ENCODE measurements at regions of chr22 and their contacts with region 1.

Region 1: GRCh38 chr22:40922484-40923303 is 28.5 kb upstream of the RBX1 start:
- DNase-seq: no peak
- H3K4me3 ChIP-seq: no peak overlapping the region
- H3K27ac ChIP-seq: no peak overlapping the region
- H3K4me1 ChIP-seq: peaks cover 0 to 4% (median 1%) of the 10 kb centered on the region in 4 donors
- H3K27me3 ChIP-seq: no peaks in the 10 kb centered on the region
- CTCF ChIP-seq: peak; percentile 33 to 75 (median 60)
- EP300 ChIP-seq: no peak
- POLR2A ChIP-seq: no peak

Region 2: DNA sequence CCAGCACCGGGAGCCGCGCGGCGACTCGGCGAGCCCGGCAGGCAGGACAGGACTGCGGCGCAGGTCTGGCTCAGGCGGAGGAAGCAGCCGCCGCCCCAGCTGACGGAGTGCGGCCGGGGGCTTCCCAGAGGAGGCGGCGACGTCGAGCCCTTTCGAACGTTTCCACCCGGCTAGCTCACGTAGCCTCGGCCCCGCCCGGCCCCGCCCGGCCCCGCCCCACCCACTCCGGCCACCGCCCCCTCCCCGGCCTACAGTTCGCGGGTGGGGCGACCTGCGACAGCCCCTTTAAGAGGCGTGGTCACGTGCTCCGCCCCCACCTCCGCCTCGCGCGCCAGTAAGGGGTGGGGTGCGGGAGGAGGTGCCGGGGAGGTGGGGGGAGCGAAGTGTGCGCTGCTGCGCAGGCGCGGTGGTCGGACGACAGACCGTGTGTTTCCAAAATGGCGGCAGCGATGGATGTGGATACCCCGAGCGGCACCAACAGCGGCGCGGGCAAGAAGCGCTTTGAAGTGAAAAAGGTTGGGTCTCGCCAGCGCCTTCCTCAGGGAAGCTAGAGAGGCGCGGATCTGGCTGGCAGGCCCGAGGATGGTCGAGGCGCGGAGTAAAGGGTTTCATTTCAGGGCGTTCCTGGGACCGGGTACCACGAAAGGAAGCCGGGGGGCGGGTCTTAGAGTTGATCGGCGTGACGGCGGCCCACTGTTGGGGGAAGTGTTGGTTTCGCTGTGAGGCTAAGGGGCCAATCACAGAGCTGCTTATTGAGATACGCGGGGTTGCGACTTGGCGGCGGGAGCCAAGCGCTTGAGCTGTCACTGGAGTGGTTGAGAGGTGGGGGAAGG is 28.5 kb after region 1 on chr22 and contains the start of gene RBX1:
- intact Hi-C with region 1: no loop called
- DNase-seq: peak; percentile 99
- H3K4me3 ChIP-seq: peak within 1 kb of the TSS; percentile 72 to 86 (median 80)
- H3K27ac ChIP-seq: peak within 1 kb of the TSS; percentile 96 to 98 (median 97)
- H3K4me1 ChIP-seq: peaks cover 0 to 38% (median 23%) of the 10 kb centered on the region in 4 donors
- H3K27me3 ChIP-seq: no peaks in the 10 kb centered on the region
- CTCF ChIP-seq: no peak
- EP300 ChIP-seq: peak in 1 of 4 donors; percentile 79
- POLR2A ChIP-seq: peak; percentile 25 to 39
- total RNA-seq, gene RBX1: 32.4 to 72.8 (median 51.2) TPM

Region 3: DNA sequence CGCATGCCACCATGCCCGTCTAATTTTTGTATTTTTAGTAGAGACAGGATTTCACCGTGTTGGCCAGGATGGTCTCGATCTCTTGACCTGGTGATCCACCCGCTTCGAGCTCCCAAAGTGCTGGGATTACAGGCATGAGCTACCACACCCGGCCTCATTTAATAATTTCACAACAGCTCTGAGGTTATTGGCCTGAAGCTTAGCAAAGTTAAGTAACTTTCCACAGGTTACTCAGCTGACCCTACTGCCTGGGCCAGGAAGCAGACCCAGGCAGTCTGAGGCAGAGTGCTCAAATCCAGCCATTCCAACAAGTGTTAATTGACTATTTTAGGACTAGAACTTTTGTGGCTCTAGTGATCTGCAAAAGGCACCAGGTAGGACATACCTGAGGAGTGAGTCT is 230.2 kb after region 1 on chr22:
- intact Hi-C with region 1: loop called (anchors 5 kb)
- DNase-seq: no peak
- H3K4me3 ChIP-seq: no peak overlapping the region
- H3K27ac ChIP-seq: no peak overlapping the region
- H3K4me1 ChIP-seq: no peaks in the 10 kb centered on the region
- H3K27me3 ChIP-seq: no peaks in the 10 kb centered on the region
- CTCF ChIP-seq: no peak
- EP300 ChIP-seq: no peak
- POLR2A ChIP-seq: no peak

Region 4: GRCh38 chr22:41237707-41238569 is 315.2 kb after region 1 on chr22:
- intact Hi-C with region 1: loop called (anchors 2 kb)
- DNase-seq: peak; percentile 79
- H3K4me3 ChIP-seq: peak overlapping the region; percentile 10 to 61 (median 48)
- H3K27ac ChIP-seq: peak overlapping the region; percentile 14 to 54 (median 40)
- H3K4me1 ChIP-seq: peaks cover 0 to 25% (median 22%) of the 10 kb centered on the region in 4 donors
- H3K27me3 ChIP-seq: no peaks in the 10 kb centered on the region
- CTCF ChIP-seq: peak in 1 of 4 experiments; percentile 40
- EP300 ChIP-seq: no peak
- POLR2A ChIP-seq: no peak

Measured in sigmoid colon (tissue), 7 donors.